ENCODE measurements at regions of chr10 and their contacts with region 1.

Region 1: DNA sequence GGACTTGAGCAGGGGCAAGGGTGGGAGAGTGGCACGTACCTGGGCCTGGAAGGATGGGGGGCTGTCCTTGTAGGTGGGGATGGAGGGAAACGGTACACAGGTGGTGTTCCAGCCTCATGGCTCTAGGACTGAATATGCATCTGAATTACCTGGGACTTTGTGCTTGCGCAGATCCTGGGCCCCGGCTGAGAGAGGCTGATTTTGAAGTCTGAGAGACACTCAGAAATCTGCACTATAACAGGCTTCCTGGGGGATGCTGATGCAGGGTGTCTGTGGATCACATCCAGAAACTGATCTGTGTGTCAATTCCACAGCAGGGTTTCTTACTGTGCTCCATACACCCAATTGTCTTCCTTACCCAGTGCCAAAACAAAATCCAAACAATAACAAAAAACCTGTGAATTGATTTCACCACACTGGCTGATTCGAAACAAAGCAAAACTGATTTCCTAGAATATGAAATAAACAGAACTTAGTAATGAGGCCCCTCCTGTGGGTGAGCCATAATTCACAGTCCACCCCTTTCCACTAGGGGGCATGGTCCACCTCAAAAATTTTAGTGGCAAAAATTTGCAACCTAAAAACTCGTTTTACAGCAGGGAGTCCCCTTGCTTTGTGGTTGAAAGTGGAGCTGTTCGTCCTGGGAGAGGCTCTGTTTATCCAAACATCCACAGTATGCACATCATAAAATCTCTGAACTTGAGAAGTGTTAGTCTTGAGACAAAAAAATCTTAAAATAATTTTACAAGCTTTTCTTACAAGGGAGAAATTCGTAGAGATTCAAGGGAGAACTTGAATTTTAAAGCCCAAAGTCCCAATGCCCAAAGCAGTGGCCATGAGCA is 32.0 kb upstream of the PLEKHA1 start:
- DNase-seq: peak in 39 of 42 donors; percentile 26 to 90 (median 67)

Region 2: DNA sequence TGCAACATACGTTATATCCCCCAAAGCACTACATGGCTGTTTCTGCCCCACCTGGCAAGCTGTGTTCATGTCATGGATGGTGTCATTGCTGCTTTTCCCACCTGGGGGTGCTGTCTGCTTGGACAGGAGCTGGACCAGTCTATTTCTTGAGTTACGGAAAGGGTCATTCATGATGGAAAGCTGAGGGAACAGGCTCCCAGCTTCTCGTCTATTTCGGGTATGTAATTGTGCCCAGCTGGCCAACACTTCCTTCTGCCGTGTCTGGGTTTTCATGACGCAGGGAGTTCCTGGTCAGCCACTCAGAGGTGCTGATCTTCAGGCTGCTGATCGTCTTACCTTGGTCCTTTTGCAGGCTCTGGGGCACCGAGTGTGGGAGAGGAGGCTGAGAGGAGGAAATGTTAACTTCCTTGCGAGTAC is 62.8 kb before region 1 on chr10:
- intact Hi-C with region 1: no loop called
- DNase-seq: peak in 39 of 42 donors; percentile 32 to 89 (median 65)

Region 3: DNA sequence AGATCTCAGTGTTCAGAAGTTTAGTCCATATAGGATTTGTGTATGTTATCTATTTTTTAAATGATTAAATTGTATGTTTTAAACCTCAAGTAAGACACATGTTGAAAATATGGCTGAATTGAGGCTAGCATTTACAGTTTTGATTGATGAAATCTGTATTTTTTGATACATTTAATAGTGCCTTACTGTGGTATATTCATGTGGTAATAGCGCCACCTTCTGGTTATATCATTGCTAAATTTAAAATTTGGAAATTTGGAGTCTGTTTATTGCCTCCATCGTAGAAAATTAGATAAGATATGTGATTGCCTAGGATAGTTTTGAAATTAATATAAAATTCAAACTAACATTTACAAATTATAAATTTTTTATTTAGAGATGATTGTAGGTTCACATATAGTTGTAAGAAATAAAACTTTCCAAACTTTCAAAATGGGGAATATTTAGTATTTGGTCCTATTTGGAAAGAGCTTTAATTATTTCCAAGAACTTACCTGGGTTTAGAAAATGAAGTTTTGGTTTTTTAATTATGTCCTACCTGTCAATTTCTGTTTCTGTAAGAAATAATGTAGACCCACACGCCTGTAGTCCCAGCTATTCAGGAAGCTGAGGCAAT is 92.8 kb after region 1 on chr10:
- intact Hi-C with region 1: loop called (anchors 10 kb)
- DNase-seq: no peak

Measured in head of caudate nucleus (tissue), 42 donors.